GM13976 (cell line): ENCODE measurements at regions of chr11 and their contacts with region 1.

Region 1: GRCh38 chr11:72024069-72024754 is 25.5 kb downstream of the IL18BP start:
- DNase-seq: no peak
- CTCF ChIP-seq: no peak

Region 2: DNA sequence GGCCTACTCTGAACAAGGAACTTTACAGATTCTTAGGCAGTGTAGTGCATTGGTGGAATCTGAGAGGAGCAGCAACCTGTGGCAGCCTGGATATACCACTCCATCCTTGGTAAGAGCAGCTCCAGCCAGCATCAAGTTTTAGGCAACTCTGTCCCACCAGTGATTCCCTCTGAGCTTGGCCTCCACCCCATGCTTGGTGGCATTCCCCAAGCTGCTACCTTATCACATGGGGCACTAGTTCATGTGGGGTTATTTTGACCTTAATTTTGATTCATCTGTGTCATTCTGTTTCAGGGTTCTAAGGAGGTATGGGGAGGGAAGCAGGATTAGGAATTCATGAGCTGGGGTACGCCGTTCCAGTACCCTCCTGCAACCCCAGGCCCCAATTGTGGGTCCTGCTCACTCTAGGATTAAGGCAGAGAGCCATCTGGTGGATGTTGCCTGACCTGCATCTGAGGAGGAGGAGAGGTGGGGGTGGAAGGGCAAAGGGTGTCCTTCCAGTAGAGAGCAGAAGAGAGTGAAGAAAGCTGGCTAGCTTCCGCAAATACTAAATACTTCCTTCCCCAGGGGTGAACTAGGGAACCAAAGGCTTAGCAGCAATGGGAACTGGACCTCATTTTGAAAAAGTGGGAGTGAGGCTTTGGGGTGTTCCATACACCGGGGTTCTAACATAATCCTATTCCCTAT is 66.9 kb after region 1 on chr11:
- in situ Hi-C with region 1: loop called (anchors 5 kb)
- DNase-seq: peak; percentile 75
- CTCF ChIP-seq: peak; percentile 83